ENCODE measurements at regions of chr12 and their contacts with region 1.

Region 1: GRCh38 chr12:17853054-17853453 is 236.9 kb downstream of the RERGL start:
- DNase-seq: no peak
- H3K4me3 ChIP-seq: no peak overlapping the region
- H3K27ac ChIP-seq: no peak overlapping the region
- H3K4me1 ChIP-seq: no peaks in the 10 kb centered on the region
- H3K27me3 ChIP-seq: no peaks in the 10 kb centered on the region
- CTCF ChIP-seq: no peak
- EP300 ChIP-seq: no peak
- POLR2A ChIP-seq: no peak

Region 2: GRCh38 chr12:17691369-17691768 is 161.7 kb before region 1 on chr12:
- intact Hi-C with region 1: no loop called
- DNase-seq: no peak
- H3K4me3 ChIP-seq: no peak overlapping the region
- H3K27ac ChIP-seq: no peak overlapping the region
- H3K4me1 ChIP-seq: no peaks in the 10 kb centered on the region
- H3K27me3 ChIP-seq: no peaks in the 10 kb centered on the region
- CTCF ChIP-seq: no peak
- EP300 ChIP-seq: no peak
- POLR2A ChIP-seq: no peak

Region 3: DNA sequence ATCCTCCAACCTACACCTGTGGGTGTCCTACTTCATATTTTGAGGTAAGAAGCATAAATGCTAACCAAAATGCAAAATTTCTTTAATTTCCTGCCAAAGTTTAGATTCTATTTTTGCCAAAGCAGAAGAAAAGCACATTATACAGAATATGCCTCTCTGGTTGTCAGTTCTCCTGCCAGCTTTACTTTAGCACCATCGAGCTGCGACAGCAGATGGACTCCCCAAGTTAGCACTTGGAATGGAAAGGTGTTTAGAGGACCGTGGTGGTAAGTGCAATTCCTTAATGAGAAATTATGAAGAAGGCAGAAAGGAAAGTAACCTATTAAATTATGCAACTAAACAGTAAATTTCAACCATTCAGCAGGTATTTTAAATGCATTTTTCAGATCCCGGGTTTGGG is 89.7 kb before region 1 on chr12:
- intact Hi-C with region 1: loop called (anchors 5 kb)
- DNase-seq: no peak
- H3K4me3 ChIP-seq: no peak overlapping the region
- H3K27ac ChIP-seq: no peak overlapping the region
- H3K4me1 ChIP-seq: no peaks in the 10 kb centered on the region
- H3K27me3 ChIP-seq: no peaks in the 10 kb centered on the region
- CTCF ChIP-seq: no peak
- EP300 ChIP-seq: no peak
- POLR2A ChIP-seq: no peak

Region 4: GRCh38 chr12:17878716-17879115 is 25.7 kb after region 1 on chr12:
- intact Hi-C with region 1: no loop called
- DNase-seq: no peak
- H3K4me3 ChIP-seq: no peak overlapping the region
- H3K27ac ChIP-seq: no peak overlapping the region
- H3K4me1 ChIP-seq: no peaks in the 10 kb centered on the region
- H3K27me3 ChIP-seq: no peaks in the 10 kb centered on the region
- CTCF ChIP-seq: no peak
- EP300 ChIP-seq: no peak
- POLR2A ChIP-seq: no peak

Region 5: GRCh38 chr12:18158774-18159557 is 305.9 kb after region 1 on chr12:
- intact Hi-C with region 1: no loop called
- DNase-seq: no peak
- H3K4me3 ChIP-seq: no peak overlapping the region
- H3K27ac ChIP-seq: no peak overlapping the region
- H3K4me1 ChIP-seq: no peaks in the 10 kb centered on the region
- H3K27me3 ChIP-seq: no peaks in the 10 kb centered on the region
- CTCF ChIP-seq: no peak
- EP300 ChIP-seq: no peak
- POLR2A ChIP-seq: no peak

Region 6: GRCh38 chr12:18183141-18183540 is 330.1 kb after region 1 on chr12:
- intact Hi-C with region 1: no loop called
- DNase-seq: no peak
- H3K4me3 ChIP-seq: no peak overlapping the region
- H3K27ac ChIP-seq: no peak overlapping the region
- H3K4me1 ChIP-seq: no peaks in the 10 kb centered on the region
- H3K27me3 ChIP-seq: no peaks in the 10 kb centered on the region
- CTCF ChIP-seq: no peak
- EP300 ChIP-seq: no peak
- POLR2A ChIP-seq: no peak